Motor neuron (in vitro differentiated cells): ENCODE measurements at regions of chr1 and their contacts with region 1.

Region 1: DNA sequence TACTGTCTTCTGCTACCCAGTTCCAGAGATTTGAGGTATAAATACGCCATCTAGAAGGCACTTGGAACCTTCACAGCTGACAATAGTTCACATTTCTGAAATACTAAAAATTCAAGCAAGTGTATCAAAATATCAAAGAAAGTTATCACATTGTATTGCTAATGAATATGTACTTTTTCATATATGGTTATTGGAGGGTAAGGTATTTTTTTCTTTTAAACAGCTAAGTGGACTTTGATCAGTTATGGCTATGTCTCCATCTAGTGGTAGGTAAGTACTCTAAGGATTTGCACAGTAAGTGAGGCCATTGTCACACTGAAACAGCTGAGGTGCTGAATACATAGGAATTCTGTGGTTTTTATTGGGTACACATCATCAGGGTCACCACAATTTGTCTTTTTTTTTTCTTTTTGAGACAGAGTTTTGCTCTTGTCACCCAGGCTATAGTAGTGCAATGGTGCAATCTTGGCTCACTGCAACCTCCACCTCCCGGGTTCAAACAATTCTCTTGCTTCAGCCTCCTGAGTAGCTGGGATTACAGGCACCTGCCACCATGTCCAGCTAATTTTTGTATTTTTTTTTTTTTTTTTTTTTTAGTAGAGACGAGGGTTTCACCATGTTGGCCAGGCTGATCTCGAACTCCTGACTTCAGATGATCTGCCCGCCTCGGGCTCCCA is 49.1 kb upstream of the CR2 start:
- ATAC-seq: peak; percentile 52 to 88 (median 72)
- H3K4me3 ChIP-seq: no peak overlapping the region
- H3K27ac ChIP-seq: no peak overlapping the region
- H3K4me1 ChIP-seq: no peaks in the 10 kb centered on the region

Region 2: DNA sequence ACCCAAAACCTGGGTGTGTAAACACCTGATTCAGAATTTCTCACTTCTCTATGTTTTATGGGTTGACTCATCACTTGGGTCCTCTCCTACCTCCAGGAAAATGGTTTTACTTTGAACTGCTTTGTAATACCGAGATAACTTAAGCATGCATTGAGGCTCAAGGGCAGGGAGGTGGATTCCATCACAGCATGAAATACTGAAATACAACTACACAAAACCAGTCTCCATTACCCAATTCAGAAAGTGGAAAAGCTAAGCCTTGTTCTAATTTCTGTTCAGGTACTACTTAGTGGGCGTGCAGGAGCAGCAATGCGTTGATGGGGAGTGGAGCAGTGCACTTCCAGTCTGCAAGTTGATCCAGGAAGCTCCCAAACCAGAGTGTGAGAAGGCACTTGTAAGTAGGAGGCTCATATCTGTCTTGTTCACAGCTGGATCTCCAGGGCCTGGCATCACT is 307.1 kb before region 1 on chr1:
- in situ Hi-C with region 1: loop called in 4 of 9 experiments (anchors 10 to 25 kb)
- ATAC-seq: peak in 2 of 8 experiments; percentile 49 to 79
- H3K4me3 ChIP-seq: no peak overlapping the region
- H3K27ac ChIP-seq: no peak overlapping the region
- H3K4me1 ChIP-seq: no peaks in the 10 kb centered on the region

Region 3: GRCh38 chr1:207691841-207692240 is 286.9 kb after region 1 on chr1:
- in situ Hi-C with region 1: no loop called
- ATAC-seq: peak in 3 of 8 experiments; percentile 31 to 91 (median 48)
- H3K4me3 ChIP-seq: no peak overlapping the region
- H3K27ac ChIP-seq: no peak overlapping the region
- H3K4me1 ChIP-seq: no peaks in the 10 kb centered on the region